AG04449 (cell line): ENCODE measurements at regions of chr19 and their contacts with region 1.

Region 1: GRCh38 chr19:31054430-31054829 is 294.8 kb downstream of the TSHZ3 start:
- DNase-seq: peak; percentile 5
- H3K4me3 ChIP-seq: no peak overlapping the region
- CTCF ChIP-seq: peak; percentile 85

Region 2: DNA sequence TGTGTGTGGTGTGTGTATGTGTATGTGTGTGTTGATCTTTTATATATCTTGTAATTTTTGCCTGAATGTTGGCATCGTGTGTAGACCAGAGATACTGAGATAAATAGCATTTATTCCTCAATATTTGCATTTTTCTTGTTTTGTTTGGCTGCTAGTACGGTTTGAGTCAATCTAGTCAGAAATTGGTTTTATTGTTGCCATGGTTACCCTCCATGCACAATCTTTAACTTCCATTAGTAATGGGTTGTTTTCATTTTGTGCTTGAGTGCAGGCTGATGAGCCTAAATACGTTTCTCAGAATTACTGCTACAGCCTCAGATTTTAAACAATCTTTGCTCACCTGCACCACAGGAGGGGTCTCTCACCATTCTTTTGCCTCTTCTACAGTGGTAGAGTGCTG is 18.9 kb before region 1 on chr19:
- CTCF ChIA-PET with region 1: no interaction called
- POLR2A ChIA-PET with region 1: no interaction called
- DNase-seq: no peak
- H3K4me3 ChIP-seq: no peak overlapping the region
- CTCF ChIP-seq: no peak

Region 3: GRCh38 chr19:31064491-31064890 is 10.1 kb after region 1 on chr19:
- CTCF ChIA-PET with region 1: interaction called, 14 read pairs
- POLR2A ChIA-PET with region 1: no interaction called
- DNase-seq: no peak
- H3K4me3 ChIP-seq: no peak overlapping the region
- CTCF ChIP-seq: no peak